ENCODE measurements at regions of chrX and their contacts with region 1.

Region 1: GRCh38 chrX:20594985-20595384 is 328.3 kb upstream of the RPS6KA3 start:
- DNase-seq: no peak
- H3K4me3 Mint-ChIP-seq: no peak overlapping the region
- H3K27ac Mint-ChIP-seq: no peak overlapping the region
- H3K4me1 Mint-ChIP-seq: peaks cover 12% of the 10 kb centered on the region
- H3K27me3 Mint-ChIP-seq: no peaks in the 10 kb centered on the region

Region 2: GRCh38 chrX:20623448-20623847 is 28.5 kb after region 1 on chrX:
- CTCF ChIA-PET with region 1: no interaction called
- intact Hi-C with region 1: loop called (anchors 2 kb)
- DNase-seq: peak; percentile 4
- H3K4me3 Mint-ChIP-seq: no peak overlapping the region
- H3K27ac Mint-ChIP-seq: no peak overlapping the region
- H3K4me1 Mint-ChIP-seq: peaks cover 2% of the 10 kb centered on the region
- H3K27me3 Mint-ChIP-seq: peaks cover 7% of the 10 kb centered on the region

Measured in activated naive CD4-positive, alpha-beta T cell treated with anti-CD3 and anti-CD28 coated beads for 36 hours (primary cell).